Gastrocnemius medialis (tissue), 4 donors: ENCODE measurements at regions of chr16 and their contacts with region 1.

Region 1: GRCh38 chr16:17271687-17272086 is 199.1 kb downstream of the XYLT1 start:
- DNase-seq: no peak
- ATAC-seq: no peak
- H3K4me3 ChIP-seq: no peak overlapping the region
- H3K27ac ChIP-seq: peak overlapping the region in 1 of 4 donors; percentile 26
- H3K4me1 ChIP-seq: peaks cover 17 to 32% of the 10 kb centered on the region in 2 donors
- H3K27me3 ChIP-seq: no peaks in the 10 kb centered on the region
- CTCF ChIP-seq: no peak
- POLR2A ChIP-seq: no peak

Region 2: DNA sequence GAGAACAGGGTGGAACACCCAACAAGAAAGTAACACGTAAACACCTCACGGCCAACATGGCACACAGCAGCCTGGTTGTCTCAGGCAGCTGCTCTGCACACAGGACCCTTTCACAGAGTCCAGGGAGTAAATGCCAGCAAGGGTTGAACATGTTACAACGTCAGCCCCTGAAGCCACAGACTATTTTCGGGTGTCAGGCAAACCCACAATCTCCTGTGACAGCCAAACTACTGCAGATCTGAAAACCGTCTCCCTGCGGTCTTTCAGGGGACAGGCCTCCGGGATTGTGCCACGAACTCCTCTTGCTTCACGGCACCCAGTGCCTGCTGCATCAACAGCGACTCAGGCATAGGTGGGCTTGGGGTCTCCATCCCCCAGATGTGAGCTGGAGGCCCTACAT is 71.3 kb after region 1 on chr16:
- in situ Hi-C with region 1: no loop called
- intact Hi-C with region 1: loop called (anchors 5 kb)
- DNase-seq: no peak
- ATAC-seq: no peak
- H3K4me3 ChIP-seq: no peak overlapping the region
- H3K27ac ChIP-seq: no peak overlapping the region
- H3K4me1 ChIP-seq: peaks cover 14 to 16% of the 10 kb centered on the region in 2 donors
- H3K27me3 ChIP-seq: no peaks in the 10 kb centered on the region
- CTCF ChIP-seq: no peak
- POLR2A ChIP-seq: no peak

Region 3: DNA sequence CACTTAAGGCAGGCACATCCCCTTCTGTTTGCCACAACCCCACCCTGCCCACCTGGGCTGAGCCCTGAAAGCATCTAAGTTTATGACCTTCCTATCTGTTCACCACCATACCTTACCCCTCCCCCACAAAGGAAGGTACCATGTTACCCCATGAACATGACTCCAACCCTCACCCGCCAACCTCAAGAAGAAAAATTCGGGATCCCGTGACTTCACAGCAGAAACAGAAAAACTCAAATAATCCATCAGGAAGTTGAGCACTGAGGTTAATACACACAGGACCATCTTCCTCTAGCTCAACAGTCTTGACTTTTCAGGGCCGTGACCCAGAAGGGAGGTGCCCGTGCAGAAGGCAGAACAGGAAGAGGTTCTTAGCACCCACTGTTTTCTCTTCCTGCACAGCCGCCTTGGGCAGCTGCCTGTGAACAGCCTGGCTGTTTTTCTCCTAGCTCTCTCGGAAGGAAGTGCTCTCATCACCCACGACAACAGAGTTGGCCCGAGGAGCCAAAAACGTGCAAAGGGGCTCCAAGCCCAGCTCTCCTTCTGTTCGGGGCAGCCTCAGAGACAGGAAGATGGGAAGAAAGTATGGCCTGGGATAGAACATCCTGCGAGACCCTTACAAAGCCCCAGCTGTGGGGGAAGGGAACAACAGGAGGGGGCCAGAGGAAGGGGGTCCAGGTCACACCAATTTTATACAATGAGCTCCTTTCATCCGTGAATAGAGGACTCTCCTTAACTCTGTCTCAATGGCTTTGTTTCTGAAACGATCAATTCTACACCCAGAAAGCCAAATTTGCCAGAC is 97.9 kb after region 1 on chr16:
- in situ Hi-C with region 1: no loop called
- intact Hi-C with region 1: no loop called
- DNase-seq: peak in 1 of 2 donors; percentile 48
- ATAC-seq: no peak
- H3K4me3 ChIP-seq: no peak overlapping the region
- H3K27ac ChIP-seq: peak overlapping the region in 1 of 4 donors; percentile 27
- H3K4me1 ChIP-seq: peaks cover 8 to 19% of the 10 kb centered on the region in 2 donors
- H3K27me3 ChIP-seq: no peaks in the 10 kb centered on the region
- CTCF ChIP-seq: no peak
- POLR2A ChIP-seq: no peak